Mucosa of descending colon (tissue), 3 donors: ENCODE measurements at regions of chr12 and their contacts with region 1.

Region 1: GRCh38 chr12:97308576-97309198 is 153.9 kb upstream of the RMST start:
- DNase-seq: peak in 1 of 3 donors; percentile 40
- ATAC-seq: peak; percentile 38
- H3K4me3 ChIP-seq: no peak overlapping the region
- H3K4me1 ChIP-seq: no peaks in the 10 kb centered on the region
- CTCF ChIP-seq: peak; percentile 29

Region 2: DNA sequence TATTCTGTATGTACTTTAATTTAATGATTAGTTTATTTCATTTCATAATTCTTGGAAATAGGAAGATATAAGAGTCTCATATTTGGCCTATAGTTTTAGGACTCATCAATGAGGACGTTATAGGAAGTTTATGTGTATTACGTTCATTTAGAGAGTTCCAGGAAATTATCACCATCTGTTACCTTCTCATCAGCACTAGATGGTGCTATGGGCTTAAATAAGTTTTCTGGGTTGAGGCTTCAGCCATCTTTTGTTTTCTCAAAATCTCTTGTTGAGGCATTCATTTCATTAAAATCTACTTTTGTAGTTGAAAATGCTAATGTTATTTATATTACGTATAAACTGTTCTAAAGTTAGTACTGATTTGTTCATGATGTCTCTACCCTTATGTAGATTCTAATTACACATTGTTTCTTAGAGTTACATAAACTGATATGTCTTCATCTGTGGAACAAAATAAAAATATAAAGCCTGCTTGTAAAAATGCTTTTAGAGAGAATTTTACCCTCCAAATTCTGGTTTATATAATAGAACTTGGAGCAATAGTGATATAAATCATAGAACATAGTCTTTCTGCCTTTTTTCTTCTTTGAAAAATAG is 730.1 kb before region 1 on chr12:
- intact Hi-C with region 1: loop called in 1 of 2 experiments (anchors 10 kb)
- DNase-seq: no peak
- ATAC-seq: peak; percentile 45
- H3K4me3 ChIP-seq: no peak overlapping the region
- H3K4me1 ChIP-seq: no peaks in the 10 kb centered on the region
- CTCF ChIP-seq: no peak

Region 3: DNA sequence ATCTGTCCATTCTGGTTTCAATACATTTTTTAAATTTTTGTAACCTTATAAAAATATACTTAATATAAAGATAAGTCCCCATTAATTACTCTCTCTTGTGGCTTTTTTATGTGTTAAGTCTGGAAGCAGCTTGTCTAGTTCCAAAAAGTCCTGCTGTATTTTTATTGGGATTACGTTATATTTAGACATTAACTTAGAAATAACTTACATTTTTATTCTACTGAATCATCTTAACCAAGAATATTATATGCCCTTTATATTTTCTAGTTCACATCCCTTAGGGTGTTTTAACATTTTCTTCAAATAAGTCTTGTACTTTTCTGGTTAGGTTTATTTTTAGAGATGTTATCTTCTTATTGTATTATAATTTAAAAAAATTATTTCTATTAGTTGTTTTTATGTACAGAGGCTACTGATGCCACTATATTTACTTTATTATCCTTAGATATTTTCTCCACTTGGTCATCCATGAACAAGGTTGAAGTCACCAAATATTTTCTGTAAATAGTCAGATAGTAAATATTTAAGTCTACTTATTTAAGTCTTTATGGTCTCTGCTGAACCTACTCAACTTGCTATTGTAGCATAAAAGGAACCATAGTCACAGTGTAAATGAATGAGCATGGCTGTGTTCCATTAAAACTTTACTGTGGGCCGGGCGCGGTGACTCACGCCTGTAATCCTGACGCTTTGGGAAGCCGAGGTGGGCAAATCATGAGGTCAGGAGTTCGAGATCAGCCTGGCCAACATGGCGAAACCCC is 534.0 kb before region 1 on chr12:
- intact Hi-C with region 1: no loop called
- DNase-seq: no peak
- ATAC-seq: no peak
- H3K4me3 ChIP-seq: no peak overlapping the region
- H3K4me1 ChIP-seq: no peaks in the 10 kb centered on the region
- CTCF ChIP-seq: no peak

Region 4: DNA sequence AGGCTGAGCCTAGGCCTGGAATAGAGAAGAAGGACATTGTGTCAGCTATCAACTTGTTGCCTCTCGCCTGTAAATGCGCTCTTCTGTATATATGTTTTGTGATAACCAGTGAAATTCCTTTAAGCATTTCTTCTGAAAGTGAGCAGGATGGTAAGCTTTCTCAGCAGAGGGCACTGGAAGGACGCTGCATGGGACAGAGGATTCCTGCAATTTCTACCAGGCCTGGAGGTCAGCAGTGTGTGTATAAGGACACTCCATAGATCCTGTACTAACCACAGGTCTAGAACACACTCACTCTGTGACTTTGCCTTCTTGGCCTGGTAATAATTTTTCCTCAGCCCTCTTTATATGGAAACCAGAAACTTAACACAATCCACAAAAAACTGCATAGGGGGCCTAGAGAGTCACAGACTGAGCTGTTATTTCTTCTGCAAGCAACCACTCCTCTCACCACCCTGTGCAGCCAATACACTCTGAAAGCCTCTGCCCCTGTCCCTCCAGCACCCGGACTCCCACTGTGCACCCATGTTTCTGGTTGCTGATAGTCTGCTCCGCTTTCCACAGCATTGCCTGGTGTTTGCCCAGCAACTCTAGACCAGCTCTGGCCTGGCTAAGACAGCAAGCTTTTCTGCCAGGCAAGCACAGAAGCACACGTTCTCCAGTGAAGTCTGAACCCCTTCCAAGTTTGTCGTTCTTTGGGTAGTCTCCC is 59.9 kb after region 1 on chr12:
- intact Hi-C with region 1: no loop called
- DNase-seq: no peak
- ATAC-seq: no peak
- H3K4me3 ChIP-seq: no peak overlapping the region
- H3K4me1 ChIP-seq: no peaks in the 10 kb centered on the region
- CTCF ChIP-seq: no peak

Region 5: DNA sequence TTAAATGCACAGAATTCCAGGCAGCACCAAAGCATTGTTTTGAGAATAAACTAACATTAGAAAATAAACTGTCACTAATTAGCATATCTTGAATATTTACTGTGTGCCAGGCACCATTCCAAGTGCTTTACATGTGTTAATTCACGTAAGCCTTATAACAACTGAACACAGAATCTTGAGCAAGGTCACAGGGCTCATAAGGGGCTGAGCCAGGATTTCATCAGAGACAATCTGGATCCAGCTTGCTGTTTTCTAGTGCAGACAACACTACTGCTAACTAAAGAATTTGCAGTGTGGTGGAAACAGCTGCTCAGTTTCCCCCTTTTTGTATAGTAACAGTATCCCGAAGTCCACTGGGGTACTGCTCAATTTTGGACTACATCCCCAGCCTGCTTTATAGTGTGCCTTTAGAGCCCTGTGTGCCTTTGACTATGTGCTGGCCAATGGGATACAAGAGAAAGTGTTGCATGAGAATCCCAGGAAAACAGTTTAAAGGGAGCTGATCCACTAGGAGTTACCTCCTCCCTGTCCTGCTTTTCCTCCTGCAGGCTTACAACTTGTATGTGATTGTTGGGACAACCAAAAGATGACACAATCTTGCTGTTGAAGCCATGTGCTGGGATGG is 117.9 kb after region 1 on chr12:
- intact Hi-C with region 1: no loop called
- DNase-seq: no peak
- ATAC-seq: no peak
- H3K4me3 ChIP-seq: no peak overlapping the region
- H3K4me1 ChIP-seq: no peaks in the 10 kb centered on the region
- CTCF ChIP-seq: no peak

Region 6: GRCh38 chr12:98037401-98038140 is 728.9 kb after region 1 on chr12:
- intact Hi-C with region 1: no loop called
- DNase-seq: no peak
- ATAC-seq: no peak
- H3K4me3 ChIP-seq: no peak overlapping the region
- H3K4me1 ChIP-seq: no peaks in the 10 kb centered on the region
- CTCF ChIP-seq: no peak